ENCODE measurements at regions of chr12 and their contacts with region 1.

Region 1: DNA sequence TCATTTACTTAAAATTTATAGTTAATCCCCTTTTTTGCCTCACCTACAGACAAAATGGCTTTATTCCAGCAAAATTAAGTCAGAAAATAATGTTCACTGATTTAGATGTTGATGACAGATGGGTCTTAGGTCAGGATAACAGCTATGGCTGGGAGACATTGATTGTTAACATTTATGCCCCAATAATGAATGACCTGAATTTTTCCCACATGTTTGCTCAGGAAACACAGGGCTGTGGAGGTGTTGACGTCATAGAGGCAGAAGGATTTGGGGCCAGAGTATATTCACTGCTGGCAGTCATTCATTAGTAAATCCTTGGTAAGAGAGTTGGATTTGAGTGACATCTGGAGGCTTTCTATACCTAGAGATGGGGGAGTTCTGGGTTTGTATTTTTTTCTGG is 121.3 kb downstream of the PDE3A start:
- DNase-seq: no peak
- H3K4me3 ChIP-seq: no peak overlapping the region
- H3K4me3 Mint-ChIP-seq: no peak overlapping the region
- H3K27ac Mint-ChIP-seq: no peak overlapping the region
- H3K4me1 ChIP-seq: no peaks in the 10 kb centered on the region
- H3K4me1 Mint-ChIP-seq: no peaks in the 10 kb centered on the region
- H3K27me3 ChIP-seq: no peaks in the 10 kb centered on the region
- H3K27me3 Mint-ChIP-seq: no peaks in the 10 kb centered on the region
- CTCF ChIP-seq: no peak

Region 2: DNA sequence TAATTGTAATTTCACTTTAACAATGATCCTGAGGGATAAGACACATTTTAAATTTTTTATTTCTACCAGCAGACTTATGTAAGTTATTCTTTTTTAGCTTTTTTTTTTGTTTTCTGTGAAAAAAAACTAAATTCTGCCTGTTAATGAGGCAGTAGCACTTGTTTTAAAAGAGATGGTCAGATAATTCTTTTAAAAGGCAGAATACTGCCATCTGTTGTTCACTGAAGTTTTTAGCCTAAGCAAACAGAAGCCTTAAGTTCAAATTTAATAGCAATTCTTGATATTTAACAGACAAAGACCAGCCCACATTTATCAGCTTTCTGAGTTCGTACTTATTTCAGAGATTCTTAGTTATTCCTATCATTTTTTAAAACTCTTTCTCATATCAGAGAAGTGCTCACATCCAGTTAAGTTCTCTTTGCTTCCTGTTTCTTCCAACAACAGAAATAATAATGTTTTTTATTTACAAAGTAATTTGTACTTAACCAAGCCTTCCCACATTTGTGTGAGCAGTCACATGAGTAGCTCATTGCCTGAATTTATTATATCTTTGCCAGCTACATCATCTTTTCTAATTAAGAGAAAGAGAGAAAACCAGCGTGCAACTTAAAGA is 112.1 kb after region 1 on chr12:
- CTCF ChIA-PET with region 1: no interaction called
- POLR2A ChIA-PET with region 1: no interaction called
- intact Hi-C with region 1: loop called (anchors 5 kb)
- DNase-seq: peak in 1 of 2 experiments; percentile 17
- H3K4me3 ChIP-seq: no peak overlapping the region
- H3K4me3 Mint-ChIP-seq: no peak overlapping the region
- H3K27ac Mint-ChIP-seq: no peak overlapping the region
- H3K4me1 ChIP-seq: no peaks in the 10 kb centered on the region
- H3K4me1 Mint-ChIP-seq: no peaks in the 10 kb centered on the region
- H3K27me3 ChIP-seq: no peaks in the 10 kb centered on the region
- H3K27me3 Mint-ChIP-seq: peaks cover 2% of the 10 kb centered on the region
- CTCF ChIP-seq: peak; percentile 55 to 64